HepG2 (cell line): ENCODE measurements at regions of chr5 and their contacts with region 1.

Region 1: DNA sequence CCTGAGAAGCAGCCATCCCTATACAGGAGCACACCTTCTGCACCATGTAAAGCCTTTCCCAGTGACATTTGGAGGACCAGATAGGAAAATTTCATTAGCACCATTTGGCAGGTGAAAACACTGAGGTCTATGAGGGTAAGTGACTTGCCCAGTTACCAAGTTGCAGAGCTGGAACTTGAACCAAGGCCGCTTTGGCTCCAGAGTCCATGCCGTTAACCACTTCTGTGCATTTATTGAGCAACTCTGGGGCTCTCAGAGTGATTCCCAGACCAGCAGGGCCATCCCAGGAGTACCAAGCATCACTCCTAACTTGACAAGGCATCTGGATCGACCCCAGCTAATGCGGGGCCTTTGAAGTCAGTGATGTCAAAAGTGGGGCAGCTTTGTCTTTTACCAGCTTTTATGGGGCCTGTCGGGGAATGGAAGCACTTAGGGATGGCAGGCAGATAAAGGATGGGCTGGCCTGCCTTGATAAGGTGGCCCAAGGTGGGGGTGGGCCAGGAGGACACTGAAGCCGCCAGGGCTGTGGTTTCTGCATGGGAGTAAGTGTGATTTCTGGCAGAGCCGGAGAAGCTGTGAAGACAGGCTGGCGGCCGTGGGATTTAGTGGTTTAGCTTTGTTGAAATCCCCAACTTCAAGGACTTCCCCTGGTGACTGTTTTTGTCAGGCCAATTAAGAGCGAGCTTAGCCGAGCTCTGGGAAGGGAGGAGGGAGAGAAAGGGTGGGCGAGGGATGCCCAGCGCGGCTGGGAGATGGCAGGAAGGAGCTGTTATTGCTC is 127.3 kb downstream of the MACROH2A1 start:
- DNase-seq: peak; percentile 29
- ATAC-seq: peak; percentile 50
- H3K4me3 ChIP-seq: no peak overlapping the region
- H3K27ac ChIP-seq: no peak overlapping the region
- H3K4me1 ChIP-seq: peaks cover 36% of the 10 kb centered on the region
- H3K27me3 ChIP-seq: no peaks in the 10 kb centered on the region
- CTCF ChIP-seq: no peak
- EP300 ChIP-seq: no peak
- POLR2A ChIP-seq: no peak
- RAD21 ChIP-seq: no peak

Region 2: DNA sequence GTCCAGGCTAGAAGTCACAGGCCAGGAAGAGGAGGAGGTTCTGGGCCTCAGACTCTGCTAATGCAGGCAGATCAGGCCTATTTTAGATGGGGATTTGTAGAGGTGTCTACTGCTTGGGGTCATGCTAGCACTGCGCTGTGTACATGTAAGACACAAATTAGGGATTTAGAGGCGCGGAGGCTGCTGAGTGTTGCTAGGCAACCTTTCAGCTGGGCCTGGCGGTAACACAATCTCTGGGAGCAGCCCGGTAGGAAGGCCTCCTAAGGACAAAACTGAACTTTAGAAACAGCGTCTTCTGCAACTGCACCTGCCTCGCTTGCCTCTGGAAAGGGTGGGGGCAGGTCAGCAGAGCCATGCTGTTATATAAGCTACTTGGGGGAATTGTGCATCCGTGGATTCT is 20.6 kb before region 1 on chr5:
- CTCF ChIA-PET with region 1: no interaction called
- POLR2A ChIA-PET with region 1: no interaction called
- in situ Hi-C with region 1: no loop called
- intact Hi-C with region 1: no loop called
- DNase-seq: no peak
- ATAC-seq: no peak
- H3K4me3 ChIP-seq: no peak overlapping the region
- H3K27ac ChIP-seq: no peak overlapping the region
- H3K4me1 ChIP-seq: peaks cover 33% of the 10 kb centered on the region
- H3K27me3 ChIP-seq: no peaks in the 10 kb centered on the region
- CTCF ChIP-seq: no peak
- EP300 ChIP-seq: no peak
- POLR2A ChIP-seq: no peak
- RAD21 ChIP-seq: no peak

Region 3: GRCh38 chr5:135304352-135305165 is 32.8 kb after region 1 on chr5:
- CTCF ChIA-PET with region 1: no interaction called
- POLR2A ChIA-PET with region 1: interaction called, 3 read pairs
- in situ Hi-C with region 1: no loop called
- intact Hi-C with region 1: loop called (anchors 5 kb)
- DNase-seq: peak; percentile 83
- ATAC-seq: peak; percentile 79
- H3K4me3 ChIP-seq: peak overlapping the region in 1 of 3 experiments; percentile 19; a peak in 1 of 6 replicates
- H3K27ac ChIP-seq: peak overlapping the region; percentile 63
- H3K4me1 ChIP-seq: peaks cover 64% of the 10 kb centered on the region
- H3K27me3 ChIP-seq: no peaks in the 10 kb centered on the region
- CTCF ChIP-seq: peak; percentile 41
- EP300 ChIP-seq: peak; percentile 69 to 82; a peak in 3 of 4 replicates
- POLR2A ChIP-seq: no peak
- RAD21 ChIP-seq: 0 out of 2 replicates have a peak, but pooled peaks have one; percentile 32

Region 4: GRCh38 chr5:135660826-135661575 is 389.3 kb after region 1 on chr5:
- CTCF ChIA-PET with region 1: no interaction called
- POLR2A ChIA-PET with region 1: no interaction called
- in situ Hi-C with region 1: no loop called
- intact Hi-C with region 1: no loop called
- DNase-seq: no peak
- ATAC-seq: no peak
- H3K4me3 ChIP-seq: no peak overlapping the region
- H3K27ac ChIP-seq: no peak overlapping the region
- H3K4me1 ChIP-seq: no peaks in the 10 kb centered on the region
- H3K27me3 ChIP-seq: no peaks in the 10 kb centered on the region
- CTCF ChIP-seq: no peak
- EP300 ChIP-seq: no peak
- POLR2A ChIP-seq: no peak
- RAD21 ChIP-seq: no peak